ENCODE measurements at regions of chr5 and their contacts with region 1.

Region 1: DNA sequence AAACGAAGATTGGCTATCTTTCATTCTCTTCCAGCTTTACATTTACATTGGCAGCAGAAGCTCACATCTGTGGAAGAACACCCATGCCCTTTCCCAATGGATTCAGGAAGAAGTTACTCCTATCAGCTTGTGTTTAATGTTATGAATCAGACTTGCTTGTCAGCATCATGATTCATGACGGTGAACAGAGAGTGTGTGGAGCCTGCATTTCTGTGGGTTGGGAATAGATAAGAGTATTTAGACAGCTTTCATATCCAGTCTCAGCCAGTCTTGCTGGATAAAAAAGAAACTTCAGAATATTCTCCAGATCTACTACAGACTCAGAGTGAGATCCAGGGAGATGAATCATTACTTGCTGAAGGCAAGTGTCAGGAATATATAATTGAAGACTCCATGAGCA is 812.9 kb upstream of the ZNF608 start:
- DNase-seq: peak; percentile 44
- H3K4me3 Mint-ChIP-seq: no peak overlapping the region
- H3K27ac Mint-ChIP-seq: no peak overlapping the region
- H3K4me1 Mint-ChIP-seq: peaks cover 29% of the 10 kb centered on the region
- H3K27me3 Mint-ChIP-seq: no peaks in the 10 kb centered on the region
- CTCF ChIP-seq: no peak

Region 2: DNA sequence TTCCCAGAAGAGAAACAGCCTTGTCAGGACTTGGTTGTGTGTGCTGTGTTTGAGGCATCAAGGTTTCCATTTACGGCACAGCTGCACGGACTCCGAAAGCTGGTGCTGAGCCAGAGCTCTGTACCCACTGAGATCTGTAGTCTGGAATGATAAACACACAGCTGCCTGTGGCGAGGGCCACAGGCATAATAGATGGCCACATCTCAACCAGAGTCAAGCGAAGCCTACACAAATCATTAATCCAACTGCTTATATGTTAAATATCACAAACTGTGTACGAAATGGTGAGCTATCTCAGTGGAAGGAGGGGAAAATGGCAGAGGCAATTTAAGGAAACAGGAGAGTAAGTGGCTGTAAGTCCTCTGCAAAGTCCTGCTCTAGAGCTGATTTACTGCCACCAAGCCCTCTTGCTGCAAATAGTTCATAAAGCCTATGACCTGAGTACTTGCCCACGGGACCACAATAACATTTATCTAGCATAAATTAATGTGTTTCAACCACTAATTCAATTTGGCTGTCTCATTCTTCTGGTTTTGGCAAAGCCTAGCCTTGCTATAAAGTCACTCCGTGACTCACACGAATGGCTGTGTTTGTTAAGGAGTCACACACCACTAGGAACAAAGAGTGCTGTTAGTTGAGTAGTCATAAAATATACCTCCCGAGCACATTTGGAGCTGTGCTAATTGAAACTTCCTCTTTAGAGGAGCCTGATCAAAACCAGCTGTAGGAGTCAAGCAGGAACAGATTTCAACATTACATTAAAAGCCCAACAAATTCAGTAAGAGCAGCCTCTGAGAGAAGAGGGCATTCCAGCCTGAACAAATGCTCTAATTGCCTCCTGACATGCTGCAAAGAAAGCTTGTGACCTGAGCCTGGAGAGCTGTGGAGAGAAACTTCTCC is 74.3 kb before region 1 on chr5:
- CTCF ChIA-PET with region 1: no interaction called
- intact Hi-C with region 1: loop called (anchors 2 kb)
- DNase-seq: peak; percentile 56
- H3K4me3 Mint-ChIP-seq: peak overlapping the region; percentile 71
- H3K27ac Mint-ChIP-seq: peak overlapping the region; percentile 91
- H3K4me1 Mint-ChIP-seq: peaks cover 31% of the 10 kb centered on the region
- H3K27me3 Mint-ChIP-seq: no peaks in the 10 kb centered on the region
- CTCF ChIP-seq: no peak